ENCODE measurements at regions of chr1 and their contacts with region 1.

Region 1: DNA sequence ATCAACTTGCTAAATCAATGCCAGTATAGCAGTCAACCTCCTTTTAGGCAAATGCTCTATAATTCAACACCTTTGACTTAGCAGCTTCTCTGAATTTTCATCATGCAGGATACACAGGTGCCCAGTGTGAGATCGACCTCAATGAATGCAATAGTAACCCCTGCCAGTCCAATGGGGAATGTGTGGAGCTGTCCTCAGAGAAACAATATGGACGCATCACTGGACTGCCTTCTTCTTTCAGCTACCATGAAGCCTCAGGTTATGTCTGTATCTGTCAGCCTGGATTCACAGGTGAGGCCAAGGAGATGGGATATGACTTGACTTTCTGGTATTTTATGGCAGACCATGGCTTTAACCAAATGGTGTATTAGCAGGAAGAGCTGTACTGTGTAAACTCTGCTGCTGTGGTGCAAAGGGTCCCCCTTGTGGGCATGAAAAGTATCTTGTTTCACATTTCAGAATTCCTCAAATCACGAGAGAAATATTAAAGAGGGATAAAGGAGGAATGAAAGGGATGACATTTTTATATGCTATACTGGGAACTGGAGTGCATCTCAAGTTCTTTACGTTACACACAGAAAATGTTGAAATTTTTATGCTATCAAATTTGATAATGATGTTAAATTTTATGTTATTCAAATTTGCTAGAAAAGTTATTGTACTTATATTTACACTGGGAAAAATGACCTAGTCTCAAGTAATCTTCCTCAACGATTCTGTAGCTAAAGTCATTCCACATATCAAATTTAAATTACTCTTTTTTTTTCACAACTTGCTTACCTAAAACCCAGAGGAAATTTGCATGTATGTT is 88.9 kb downstream of the CRB1 start:
- DNase-seq: no peak
- ATAC-seq: peak; percentile 51 to 81 (median 62)
- H3K4me3 ChIP-seq: no peak overlapping the region
- H3K27ac ChIP-seq: no peak overlapping the region
- H3K4me1 ChIP-seq: no peaks in the 10 kb centered on the region
- H3K27me3 ChIP-seq: no peaks in the 10 kb centered on the region
- CTCF ChIP-seq: peak; percentile 59

Region 2: GRCh38 chr1:197180252-197180878 is 176.6 kb before region 1 on chr1:
- intact Hi-C with region 1: loop called (anchors 5 kb)
- DNase-seq: no peak
- ATAC-seq: peak; percentile 63 to 94 (median 80)
- H3K4me3 ChIP-seq: no peak overlapping the region
- H3K27ac ChIP-seq: no peak overlapping the region
- H3K4me1 ChIP-seq: no peaks in the 10 kb centered on the region
- H3K27me3 ChIP-seq: no peaks in the 10 kb centered on the region
- CTCF ChIP-seq: peak; percentile 72

Region 3: DNA sequence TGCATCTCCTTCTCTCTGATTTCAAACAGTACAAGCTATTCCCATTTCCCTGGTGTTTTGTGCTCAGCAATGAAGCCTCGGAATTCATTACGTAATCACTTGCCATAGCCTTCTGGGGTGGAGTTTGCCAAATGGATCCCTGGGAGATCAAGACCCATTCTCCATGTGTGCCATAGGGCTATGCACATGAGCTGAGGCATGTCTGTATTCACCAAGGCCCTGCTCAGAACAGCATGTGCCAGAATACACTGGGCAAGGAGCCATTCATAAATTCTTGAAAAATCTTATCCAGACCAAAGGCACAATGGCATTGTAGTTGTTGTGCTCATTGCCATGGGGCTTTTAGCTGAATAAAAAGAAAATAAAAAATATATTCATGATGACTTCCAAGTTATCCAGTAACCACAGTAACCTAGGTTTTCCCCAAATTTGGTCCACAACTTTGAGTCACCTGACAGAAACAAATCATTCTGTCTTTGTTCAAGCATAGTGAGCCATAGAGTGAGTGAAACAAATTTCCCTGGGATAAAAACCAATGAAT is 35.9 kb before region 1 on chr1:
- intact Hi-C with region 1: loop called (anchors 2 to 5 kb)
- DNase-seq: no peak
- ATAC-seq: no peak
- H3K4me3 ChIP-seq: no peak overlapping the region
- H3K27ac ChIP-seq: no peak overlapping the region
- H3K4me1 ChIP-seq: no peaks in the 10 kb centered on the region
- H3K27me3 ChIP-seq: no peaks in the 10 kb centered on the region
- CTCF ChIP-seq: no peak

Region 4: DNA sequence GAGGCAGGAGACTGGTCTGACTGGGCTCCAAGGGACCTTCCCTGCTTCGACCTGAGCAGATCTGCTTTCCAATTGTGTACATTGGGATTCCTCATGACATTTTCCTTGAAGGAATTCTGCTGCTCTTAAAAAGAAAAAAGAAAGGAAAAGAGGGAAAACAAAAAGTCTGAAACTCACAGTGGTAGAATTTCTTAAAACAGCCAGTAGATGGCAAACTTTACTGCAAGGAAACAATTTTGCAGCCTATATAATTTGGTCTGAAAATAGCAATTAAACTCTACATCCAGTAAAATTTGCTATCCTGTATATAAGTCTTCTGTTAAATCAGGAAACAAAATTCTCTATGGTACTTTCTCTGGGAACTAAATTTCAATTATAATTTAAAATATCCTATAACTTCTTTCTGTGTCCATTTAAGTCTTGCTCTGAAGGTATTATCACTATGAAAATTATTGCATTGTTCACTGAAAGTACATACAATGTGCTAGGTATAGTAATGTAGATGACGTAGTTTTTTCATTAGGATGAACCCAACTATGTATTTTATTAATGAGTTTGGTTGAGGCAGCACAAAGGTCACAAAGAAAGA is 29.1 kb before region 1 on chr1:
- intact Hi-C with region 1: loop called (anchors 2 to 5 kb)
- DNase-seq: no peak
- ATAC-seq: no peak
- H3K4me3 ChIP-seq: no peak overlapping the region
- H3K27ac ChIP-seq: no peak overlapping the region
- H3K4me1 ChIP-seq: no peaks in the 10 kb centered on the region
- H3K27me3 ChIP-seq: no peaks in the 10 kb centered on the region
- CTCF ChIP-seq: peak; percentile 43

Region 5: GRCh38 chr1:197413564-197413963 is 56.6 kb after region 1 on chr1:
- intact Hi-C with region 1: no loop called
- DNase-seq: no peak
- ATAC-seq: no peak
- H3K4me3 ChIP-seq: no peak overlapping the region
- H3K27ac ChIP-seq: no peak overlapping the region
- H3K4me1 ChIP-seq: no peaks in the 10 kb centered on the region
- H3K27me3 ChIP-seq: no peaks in the 10 kb centered on the region
- CTCF ChIP-seq: no peak

Region 6: DNA sequence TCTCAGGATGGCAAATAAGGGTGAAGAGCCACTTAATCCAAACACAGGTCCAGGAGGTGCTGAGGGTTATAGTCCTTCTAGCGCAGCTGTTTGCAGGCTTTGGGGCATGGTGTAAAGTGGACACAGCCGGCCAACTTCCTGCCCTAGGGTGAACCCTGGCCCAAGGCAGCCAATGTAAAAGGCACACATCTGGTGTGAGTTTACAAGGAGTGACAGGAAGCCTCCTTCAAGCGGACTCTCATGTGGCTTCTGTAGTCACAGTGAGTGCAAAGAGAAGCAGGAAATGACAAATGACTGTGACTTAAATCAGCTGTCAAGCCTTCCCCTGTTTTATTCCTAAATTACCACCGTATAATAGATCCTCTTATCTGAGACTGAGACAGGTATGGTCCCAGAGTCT is 124.2 kb after region 1 on chr1:
- intact Hi-C with region 1: no loop called
- DNase-seq: no peak
- ATAC-seq: peak in 3 of 4 donors; percentile 27 to 65 (median 39)
- H3K4me3 ChIP-seq: no peak overlapping the region
- H3K27ac ChIP-seq: no peak overlapping the region
- H3K4me1 ChIP-seq: no peaks in the 10 kb centered on the region
- H3K27me3 ChIP-seq: no peaks in the 10 kb centered on the region
- CTCF ChIP-seq: no peak

Measured in psoas muscle (tissue), 8 donors.